OCI-LY7 (cell line): ENCODE measurements at regions of chr14 and their contacts with region 1.

Region 1: DNA sequence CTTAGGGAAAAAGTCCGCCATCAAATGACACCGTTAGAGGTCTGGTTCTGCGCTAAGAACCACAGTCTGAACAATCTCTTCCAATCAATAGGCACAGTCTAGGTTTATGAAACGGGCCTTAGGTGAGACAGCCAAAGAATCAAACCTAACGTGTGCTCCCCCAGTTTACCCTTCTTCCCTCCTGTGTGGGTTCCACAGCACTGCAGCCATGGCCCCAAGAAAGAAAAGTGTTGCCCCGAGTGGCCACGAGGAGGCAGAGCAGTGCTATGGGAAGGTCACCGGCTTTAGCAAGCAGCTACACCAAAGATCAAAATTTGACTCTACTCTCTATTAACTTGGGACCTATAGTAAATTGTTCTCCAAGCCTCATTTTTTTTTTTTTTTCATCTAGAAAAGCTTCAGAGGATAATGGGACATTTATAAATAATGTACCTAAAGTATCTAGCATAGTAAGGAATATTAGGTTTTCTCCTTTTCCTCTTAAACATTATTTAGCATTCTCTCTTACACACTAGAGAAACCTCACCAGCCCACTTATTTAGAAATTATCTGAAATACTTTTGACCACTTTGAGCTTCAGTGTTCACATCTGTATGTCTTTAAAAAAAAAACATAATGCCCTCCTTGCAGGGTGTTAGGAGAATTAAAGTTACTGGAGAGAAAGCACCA is 70.2 kb upstream of the GPHB5 start:
- DNase-seq: peak; percentile 65
- H3K4me3 ChIP-seq: no peak overlapping the region
- H3K27ac ChIP-seq: no peak overlapping the region
- H3K4me1 ChIP-seq: no peaks in the 10 kb centered on the region
- CTCF ChIP-seq: peak; percentile 96

Region 2: DNA sequence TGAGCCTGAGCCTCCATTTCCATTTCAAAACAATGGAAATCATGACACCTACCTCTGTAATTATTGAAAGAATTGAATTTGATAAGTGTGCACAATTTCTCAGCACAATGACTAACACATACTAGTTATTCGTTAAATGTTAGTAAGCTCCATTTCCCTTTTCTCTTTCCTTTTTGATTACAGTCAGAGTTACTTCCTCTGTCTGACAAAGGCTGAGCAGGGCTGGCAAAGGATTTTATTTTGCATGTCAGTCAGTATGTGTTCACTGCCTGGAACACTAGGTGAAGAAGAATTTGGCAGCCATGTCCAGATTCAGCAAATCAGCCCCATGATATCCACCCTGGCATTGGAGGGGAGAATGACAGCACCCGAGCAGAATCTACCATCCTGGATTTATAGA is 196.8 kb before region 1 on chr14:
- CTCF ChIA-PET with region 1: no interaction called
- POLR2A ChIA-PET with region 1: no interaction called
- intact Hi-C with region 1: no loop called
- DNase-seq: no peak
- H3K4me3 ChIP-seq: no peak overlapping the region
- H3K27ac ChIP-seq: no peak overlapping the region
- H3K4me1 ChIP-seq: no peaks in the 10 kb centered on the region
- CTCF ChIP-seq: no peak

Region 3: DNA sequence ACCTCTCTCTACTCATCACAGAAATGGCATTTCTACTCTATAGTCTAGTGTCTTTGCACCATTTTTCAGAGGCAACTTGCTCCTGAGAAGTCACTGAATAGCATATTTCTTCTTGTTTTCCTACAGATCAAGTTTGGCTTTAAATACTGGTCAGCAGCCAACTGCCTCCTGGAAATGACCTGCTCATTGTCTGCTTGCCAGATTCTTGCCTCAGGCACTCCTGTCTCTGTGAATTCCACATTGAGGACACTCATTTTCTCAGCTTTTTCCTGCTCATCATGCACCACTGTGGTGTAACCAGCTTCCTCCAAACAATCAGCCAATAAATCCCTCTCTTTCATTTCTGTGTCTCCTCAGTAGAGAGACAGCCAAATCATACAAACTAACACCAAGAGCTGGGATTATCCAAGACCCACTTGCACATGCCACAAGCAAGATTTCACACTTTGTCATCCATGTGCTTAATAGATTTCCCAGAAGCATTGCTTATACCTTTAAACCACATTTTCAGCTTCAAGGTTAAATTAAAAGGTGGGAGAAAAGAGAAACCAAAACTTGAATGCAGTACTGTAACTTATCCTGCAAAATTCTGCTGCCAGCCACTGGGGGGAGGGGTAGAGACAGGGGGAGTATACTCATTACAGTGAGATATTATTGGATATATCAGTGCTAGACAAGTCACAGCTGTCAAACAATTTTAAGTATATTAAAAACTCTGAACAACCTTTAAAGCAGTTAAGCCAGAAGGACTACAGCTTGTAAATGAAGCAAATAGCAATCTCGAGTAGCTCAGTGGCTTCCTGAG is 49.3 kb after region 1 on chr14:
- CTCF ChIA-PET with region 1: no interaction called
- POLR2A ChIA-PET with region 1: no interaction called
- intact Hi-C with region 1: no loop called
- DNase-seq: peak; percentile 14
- H3K4me3 ChIP-seq: no peak overlapping the region
- H3K27ac ChIP-seq: no peak overlapping the region
- H3K4me1 ChIP-seq: peaks cover 43% of the 10 kb centered on the region
- CTCF ChIP-seq: peak; percentile 71

Region 4: GRCh38 chr14:63632932-63633514 is 244.1 kb after region 1 on chr14:
- CTCF ChIA-PET with region 1: no interaction called
- POLR2A ChIA-PET with region 1: no interaction called
- intact Hi-C with region 1: loop called (anchors 5 kb)
- DNase-seq: peak; percentile 66
- H3K4me3 ChIP-seq: no peak overlapping the region
- H3K27ac ChIP-seq: no peak overlapping the region
- H3K4me1 ChIP-seq: no peaks in the 10 kb centered on the region
- CTCF ChIP-seq: peak; percentile 90